Calu3 (cell line): ENCODE measurements at regions of chr6 and their contacts with region 1.

Region 1: GRCh38 chr6:132669690-132670291 is 10.8 kb upstream of the TAAR1 start:
- DNase-seq: no peak
- H3K4me3 Mint-ChIP-seq: no peak overlapping the region
- H3K27ac Mint-ChIP-seq: peak overlapping the region; percentile 59
- H3K4me1 Mint-ChIP-seq: peaks cover 54% of the 10 kb centered on the region
- H3K27me3 Mint-ChIP-seq: no peaks in the 10 kb centered on the region
- CTCF ChIP-seq: peak; percentile 30

Region 2: GRCh38 chr6:132530293-132530974 is 139.4 kb before region 1 on chr6:
- CTCF ChIA-PET with region 1: interaction called, 3 read pairs
- intact Hi-C with region 1: loop called (anchors 1 kb)
- DNase-seq: peak; percentile 76
- H3K4me3 Mint-ChIP-seq: peak overlapping the region; percentile 37
- H3K27ac Mint-ChIP-seq: peak overlapping the region; percentile 50
- H3K4me1 Mint-ChIP-seq: no peaks in the 10 kb centered on the region
- H3K27me3 Mint-ChIP-seq: no peaks in the 10 kb centered on the region
- CTCF ChIP-seq: peak; percentile 64

Region 3: GRCh38 chr6:132734694-132735635 is 65.2 kb after region 1 on chr6:
- CTCF ChIA-PET with region 1: interaction called, 3 read pairs
- intact Hi-C with region 1: loop called (anchors 2 kb)
- DNase-seq: peak; percentile 31
- H3K4me3 Mint-ChIP-seq: no peak overlapping the region
- H3K27ac Mint-ChIP-seq: peak overlapping the region; percentile 83
- H3K4me1 Mint-ChIP-seq: peaks cover 65% of the 10 kb centered on the region
- H3K27me3 Mint-ChIP-seq: no peaks in the 10 kb centered on the region
- CTCF ChIP-seq: no peak